ENCODE measurements at regions of chr14 and their contacts with region 1.

Region 1: GRCh38 chr14:90903101-90903500 is 86.9 kb upstream of the TTC7B start:
- DNase-seq: peak; percentile 61 to 67
- H3K4me3 ChIP-seq: no peak overlapping the region
- H3K4me1 ChIP-seq: peaks cover 4% of the 10 kb centered on the region
- H3K27me3 ChIP-seq: no peaks in the 10 kb centered on the region

Region 2: DNA sequence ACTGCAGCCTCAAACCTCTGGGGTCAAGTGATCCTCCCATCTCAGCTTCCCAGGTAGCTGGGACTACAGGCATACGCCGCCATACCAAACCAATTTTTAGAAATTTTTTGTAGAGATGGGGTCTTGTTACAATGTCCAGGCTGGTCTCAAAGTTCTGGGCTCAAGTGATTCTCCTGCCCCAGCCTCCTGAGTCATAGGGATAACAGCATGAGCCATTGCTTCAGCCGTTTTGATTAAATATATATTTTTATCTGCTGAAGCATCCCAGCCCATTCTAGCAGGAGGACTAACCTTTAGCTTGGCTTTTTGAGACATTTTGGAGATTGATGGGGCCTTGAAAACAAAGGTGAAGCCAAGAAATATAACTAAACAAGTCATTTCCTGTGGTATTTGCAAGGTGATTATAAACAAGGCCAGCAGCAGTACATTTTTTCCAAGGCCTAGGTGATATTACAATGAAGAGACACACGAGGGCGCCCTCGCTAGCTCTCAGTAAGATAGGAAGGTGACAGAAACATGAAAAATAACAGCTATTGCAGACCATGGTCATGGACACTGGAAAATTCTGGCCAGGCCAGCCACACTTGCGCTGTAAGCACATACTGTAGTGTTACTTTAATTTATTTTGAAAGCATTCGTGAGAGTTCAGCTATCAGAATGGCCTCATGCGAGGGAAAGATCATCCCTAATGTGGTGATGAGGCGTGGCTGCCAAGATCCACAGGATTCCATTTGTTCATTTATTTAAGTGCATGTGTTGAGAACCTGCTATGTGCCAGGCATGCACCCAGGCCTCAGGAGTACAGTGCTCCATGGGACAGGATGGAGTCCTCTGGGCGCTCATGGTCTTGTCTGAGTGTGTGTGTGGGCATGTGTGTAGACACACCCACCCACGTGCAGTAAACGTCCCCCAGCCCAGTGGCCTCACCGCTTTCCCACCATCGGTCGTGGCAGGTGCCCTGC is 274.3 kb after region 1 on chr14:
- in situ Hi-C with region 1: loop called (anchors 5 kb)
- DNase-seq: peak; percentile 59 to 62
- H3K4me3 ChIP-seq: no peak overlapping the region
- H3K4me1 ChIP-seq: no peaks in the 10 kb centered on the region
- H3K27me3 ChIP-seq: no peaks in the 10 kb centered on the region

Region 3: GRCh38 chr14:91286530-91286937 is 383.4 kb after region 1 on chr14:
- in situ Hi-C with region 1: loop called (anchors 25 kb)
- DNase-seq: peak; percentile 48 to 86
- H3K4me3 ChIP-seq: no peak overlapping the region
- H3K4me1 ChIP-seq: no peaks in the 10 kb centered on the region
- H3K27me3 ChIP-seq: no peaks in the 10 kb centered on the region